ENCODE measurements at regions of chr17 and their contacts with region 1.

Region 1: GRCh38 chr17:79803997-79804855 is 7.3 kb upstream of the CBX8 start:
- DNase-seq: peak; percentile 91
- ATAC-seq: peak; percentile 82
- H3K4me3 Mint-ChIP-seq: peak overlapping the region; percentile 66
- H3K27ac Mint-ChIP-seq: peak overlapping the region; percentile 63
- H3K4me1 Mint-ChIP-seq: peaks cover 43% of the 10 kb centered on the region
- H3K27me3 Mint-ChIP-seq: peaks cover 72% of the 10 kb centered on the region

Region 2: DNA sequence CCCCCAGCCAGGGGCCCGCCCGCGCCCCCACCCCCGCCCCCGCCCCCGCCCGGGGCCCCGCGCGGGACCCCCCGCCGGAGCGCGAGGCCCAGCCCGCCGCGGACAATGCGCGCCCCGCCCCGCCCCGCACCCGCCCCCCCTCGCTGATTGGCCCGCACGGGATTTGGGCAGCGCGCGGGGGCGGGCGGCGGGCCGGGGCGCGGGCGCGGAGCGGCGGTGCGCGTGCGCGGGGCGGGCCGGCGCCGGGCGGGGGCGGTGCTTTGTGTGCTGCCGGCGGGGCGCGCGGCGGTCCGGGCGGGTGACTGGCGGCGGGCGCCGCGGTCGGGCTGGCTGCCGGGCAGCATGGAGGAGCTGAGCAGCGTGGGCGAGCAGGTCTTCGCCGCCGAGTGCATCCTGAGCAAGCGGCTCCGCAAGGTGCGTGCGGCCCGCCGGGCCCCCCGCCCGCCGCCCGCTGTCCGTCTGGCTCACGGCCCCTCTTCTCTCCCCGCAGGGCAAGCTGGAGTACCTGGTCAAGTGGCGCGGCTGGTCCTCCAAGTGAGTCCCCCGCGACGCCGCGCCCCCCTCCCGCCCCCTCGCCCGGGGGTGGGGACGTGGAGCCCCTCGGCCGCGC is 26.2 kb before region 1 on chr17 and contains the start of gene CBX2:
- CTCF ChIA-PET with region 1: no interaction called
- POLR2A ChIA-PET with region 1: no interaction called
- intact Hi-C with region 1: loop called in 1 of 2 experiments (anchors 2 kb)
- DNase-seq: peak; percentile 90
- ATAC-seq: peak; percentile 84
- H3K4me3 Mint-ChIP-seq: peak within 1 kb of the TSS; percentile 77
- H3K27ac Mint-ChIP-seq: peak within 1 kb of the TSS; percentile 76
- H3K4me1 Mint-ChIP-seq: peaks cover 17% of the 10 kb centered on the region
- H3K27me3 Mint-ChIP-seq: peaks cover 64% of the 10 kb centered on the region
- total RNA-seq, gene CBX2: 4.2 to 4.3 TPM

Measured in activated CD4-positive, alpha-beta T cell treated with anti-CD3 and anti-CD28 coated beads for 36 hours (primary cell).